ENCODE measurements at regions of chr1 and their contacts with region 1.

Region 1: GRCh38 chr1:109397538-109398342 is at the start of gene SORT1:
- DNase-seq: peak; percentile 74 to 92 (median 82)
- ATAC-seq: peak; percentile 94 to 96 (median 96)
- H3K4me3 ChIP-seq: peak within 1 kb of the TSS; percentile 46 to 73 (median 64)
- H3K27ac ChIP-seq: peak within 1 kb of the TSS in 3 of 4 donors; percentile 34 to 46 (median 39)
- H3K4me1 ChIP-seq: peaks cover 4 to 38% (median 11%) of the 10 kb centered on the region in 3 donors
- H3K27me3 ChIP-seq: no peaks in the 10 kb centered on the region
- CTCF ChIP-seq: no peak
- total RNA-seq, gene SORT1: 22.9 to 60.7 (median 30.7) TPM

Region 2: DNA sequence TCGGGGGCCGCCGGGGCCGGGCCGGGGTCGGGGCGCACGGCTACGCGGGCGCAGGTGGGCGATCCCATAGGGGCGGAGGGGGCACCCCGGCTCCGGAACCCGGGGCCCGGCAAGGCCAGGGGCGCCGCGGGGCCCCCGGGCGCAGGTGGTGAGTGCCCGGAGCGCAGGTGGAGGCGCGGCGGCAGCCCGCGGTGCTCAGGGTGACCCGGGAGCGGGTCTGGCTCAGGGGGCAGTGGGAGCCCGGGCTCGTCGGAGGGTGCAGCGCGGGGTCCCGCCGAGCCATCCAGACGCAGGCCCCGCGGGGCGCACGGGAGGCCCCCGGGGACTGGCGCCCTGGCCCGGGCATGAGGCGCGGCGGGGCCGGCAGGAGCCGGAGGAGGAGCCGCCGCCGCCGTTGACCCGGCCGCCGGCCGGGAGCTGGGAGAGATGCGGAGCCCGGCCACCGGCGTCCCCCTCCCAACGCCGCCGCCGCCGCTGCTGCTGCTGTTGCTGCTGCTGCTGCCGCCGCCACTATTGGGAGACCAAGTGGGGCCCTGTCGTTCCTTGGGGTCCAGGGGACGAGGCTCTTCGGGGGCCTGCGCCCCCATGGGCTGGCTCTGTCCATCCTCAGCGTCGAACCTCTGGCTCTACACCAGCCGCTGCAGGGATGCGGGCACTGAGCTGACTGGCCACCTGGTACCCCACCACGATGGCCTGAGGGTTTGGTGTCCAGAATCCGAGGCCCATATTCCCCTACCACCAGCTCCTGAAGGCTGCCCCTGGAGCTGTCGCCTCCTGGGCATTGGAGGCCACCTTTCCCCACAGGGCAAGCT is 147.9 kb before region 1 on chr1:
- intact Hi-C with region 1: no loop called
- DNase-seq: peak in 3 of 6 donors; percentile 12 to 76 (median 74)
- ATAC-seq: peak; percentile 4 to 58 (median 21)
- H3K4me3 ChIP-seq: peak overlapping the region; percentile 53 to 73 (median 64)
- H3K27ac ChIP-seq: no peak overlapping the region
- H3K4me1 ChIP-seq: peaks cover 0 to 4% (median 0%) of the 10 kb centered on the region in 3 donors
- H3K27me3 ChIP-seq: no peaks in the 10 kb centered on the region
- CTCF ChIP-seq: no peak

Region 3: GRCh38 chr1:109263597-109264398 is 133.9 kb before region 1 on chr1:
- intact Hi-C with region 1: loop called in 1 of 3 experiments (anchors 5 kb)
- DNase-seq: peak; percentile 89 to 96 (median 94)
- ATAC-seq: peak; percentile 96 to 99 (median 97)
- H3K4me3 ChIP-seq: no peak overlapping the region
- H3K27ac ChIP-seq: no peak overlapping the region
- H3K4me1 ChIP-seq: no peaks in the 10 kb centered on the region
- H3K27me3 ChIP-seq: no peaks in the 10 kb centered on the region
- CTCF ChIP-seq: peak; percentile 94 to 99 (median 97)

Region 4: DNA sequence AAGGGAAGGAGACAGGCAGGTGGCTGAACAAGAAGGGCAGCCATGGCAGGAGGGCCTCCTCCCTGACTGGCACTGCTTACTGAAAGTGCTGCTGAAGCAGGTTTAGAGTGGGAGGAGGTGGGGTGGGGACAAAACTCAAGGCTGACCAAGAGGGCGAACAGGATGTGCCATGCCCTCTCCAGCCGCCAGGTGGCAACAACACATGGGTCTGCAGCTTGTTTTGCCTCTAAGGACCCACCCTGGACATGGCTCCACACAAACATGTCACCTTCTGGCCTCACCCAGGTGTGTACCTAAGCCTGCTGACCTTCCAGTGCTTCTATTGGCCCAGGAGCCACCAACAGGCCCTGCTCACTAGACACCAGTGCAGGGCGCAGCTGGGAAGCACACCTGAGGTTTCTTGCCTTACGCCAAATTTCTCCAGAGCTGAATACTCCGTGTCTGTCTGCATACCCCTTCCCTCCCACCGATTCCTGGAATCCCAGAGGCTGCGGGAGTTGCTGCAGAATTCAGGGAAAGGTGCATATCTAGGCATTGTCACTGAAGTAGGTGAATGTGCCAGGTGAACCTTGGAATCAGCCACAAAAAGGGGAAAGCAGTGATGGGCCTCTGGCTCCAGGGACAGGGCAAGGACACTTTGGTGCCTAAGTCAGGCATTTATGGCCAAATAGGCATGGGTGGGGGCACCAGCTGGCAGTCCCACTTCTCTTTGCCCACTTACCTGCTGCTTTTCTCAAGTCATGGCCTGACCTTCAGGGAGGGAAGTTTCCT is 120.1 kb before region 1 on chr1:
- intact Hi-C with region 1: loop called in 2 of 3 experiments (anchors 5 to 10 kb)
- DNase-seq: peak; percentile 79 to 91 (median 87)
- ATAC-seq: peak; percentile 85 to 88 (median 87)
- H3K4me3 ChIP-seq: no peak overlapping the region
- H3K27ac ChIP-seq: peak overlapping the region in 1 of 4 donors; percentile 54
- H3K4me1 ChIP-seq: peaks cover 0 to 9% (median 6%) of the 10 kb centered on the region in 3 donors
- H3K27me3 ChIP-seq: no peaks in the 10 kb centered on the region
- CTCF ChIP-seq: peak; percentile 71 to 87 (median 77)

Measured in pancreas (tissue), 10 donors.